Posterior vena cava (tissue), 2 donors: ENCODE measurements at regions of chr4 and their contacts with region 1.

Region 1: GRCh38 chr4:677431-678293 is 3.3 kb downstream of the MYL5 start:
- DNase-seq: no peak

Region 2: GRCh38 chr4:749698-750666 is 72.3 kb after region 1 on chr4:
- intact Hi-C with region 1: loop called in 1 of 2 experiments (anchors 2 kb)
- DNase-seq: no peak

Region 3: GRCh38 chr4:1055721-1056590 is 378.3 kb after region 1 on chr4:
- intact Hi-C with region 1: no loop called
- DNase-seq: peak; percentile 84